ENCODE measurements at regions of chr22 and their contacts with region 1.

Region 1: GRCh38 chr22:19218541-19219233 is 40.2 kb upstream of the SLC25A1 start:
- DNase-seq: no peak
- ATAC-seq: no peak; the same call in 1 of the 2 replicates
- H3K4me3 ChIP-seq: no peak overlapping the region
- H3K27ac ChIP-seq: no peak overlapping the region
- H3K4me1 ChIP-seq: no peaks in the 10 kb centered on the region
- H3K27me3 ChIP-seq: no peaks in the 10 kb centered on the region
- CTCF ChIP-seq: no peak

Region 2: GRCh38 chr22:19043121-19044055 is 175.3 kb before region 1 on chr22:
- CTCF ChIA-PET with region 1: no interaction called
- POLR2A ChIA-PET with region 1: no interaction called
- intact Hi-C with region 1: no loop called
- DNase-seq: no peak
- ATAC-seq: no peak
- H3K4me3 ChIP-seq: no peak overlapping the region
- H3K27ac ChIP-seq: no peak overlapping the region
- H3K4me1 ChIP-seq: no peaks in the 10 kb centered on the region
- H3K27me3 ChIP-seq: no peaks in the 10 kb centered on the region
- CTCF ChIP-seq: no peak

Region 3: DNA sequence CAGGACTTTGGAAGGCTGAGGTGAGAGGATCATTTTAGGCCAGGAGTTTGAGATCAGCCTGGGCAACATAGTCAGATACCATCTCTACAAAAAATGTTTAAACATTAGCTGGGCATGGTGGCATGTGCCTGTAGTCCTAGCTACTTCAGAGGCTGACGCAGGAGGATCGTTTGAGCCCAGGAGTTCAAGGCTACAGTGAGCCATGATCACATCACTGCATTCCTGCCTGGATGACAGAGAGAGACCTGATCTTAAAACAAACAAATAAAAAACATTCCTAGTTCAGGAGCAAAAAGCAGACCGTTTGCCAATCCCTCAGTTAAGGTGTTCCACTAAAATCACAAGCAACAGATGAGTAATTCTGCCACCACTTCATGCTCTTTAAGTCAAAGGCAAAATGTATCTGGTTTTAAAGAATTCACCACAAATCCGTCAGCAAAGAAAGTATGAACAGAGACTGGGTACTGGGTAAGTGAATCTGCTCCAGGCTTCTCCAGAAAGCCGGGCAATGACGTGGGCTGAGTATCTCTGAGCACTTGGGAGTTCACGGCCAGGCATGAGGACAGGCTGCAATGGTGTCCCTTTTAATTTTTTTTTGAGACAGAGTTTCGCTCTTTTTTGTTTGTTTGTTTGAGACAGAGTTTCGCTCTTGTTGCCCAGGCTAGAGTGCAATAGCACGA is 53.3 kb after region 1 on chr22:
- CTCF ChIA-PET with region 1: no interaction called
- POLR2A ChIA-PET with region 1: no interaction called
- intact Hi-C with region 1: loop called (anchors 1 kb)
- DNase-seq: peak; percentile 90
- ATAC-seq: peak; percentile 92
- H3K4me3 ChIP-seq: no peak overlapping the region
- H3K27ac ChIP-seq: peak overlapping the region; percentile 96
- H3K4me1 ChIP-seq: peaks cover 21% of the 10 kb centered on the region
- H3K27me3 ChIP-seq: no peaks in the 10 kb centered on the region
- CTCF ChIP-seq: no peak

Region 4: GRCh38 chr22:19291580-19292457 is 73.1 kb after region 1 on chr22 and contains the start of gene CLTCL1:
- CTCF ChIA-PET with region 1: no interaction called
- POLR2A ChIA-PET with region 1: no interaction called
- intact Hi-C with region 1: loop called (anchors 5 kb)
- DNase-seq: peak; percentile 48
- ATAC-seq: peak; percentile 33
- H3K4me3 ChIP-seq: peak within 1 kb of the TSS; percentile 90
- H3K27ac ChIP-seq: no peak within 1 kb of the TSS; the same call in 1 of the 2 replicates
- H3K4me1 ChIP-seq: peaks cover 46% of the 10 kb centered on the region
- H3K27me3 ChIP-seq: no peaks in the 10 kb centered on the region
- CTCF ChIP-seq: no peak
- total RNA-seq, gene CLTCL1: 4.5 and 5.5 TPM in 2 replicates

Region 5: DNA sequence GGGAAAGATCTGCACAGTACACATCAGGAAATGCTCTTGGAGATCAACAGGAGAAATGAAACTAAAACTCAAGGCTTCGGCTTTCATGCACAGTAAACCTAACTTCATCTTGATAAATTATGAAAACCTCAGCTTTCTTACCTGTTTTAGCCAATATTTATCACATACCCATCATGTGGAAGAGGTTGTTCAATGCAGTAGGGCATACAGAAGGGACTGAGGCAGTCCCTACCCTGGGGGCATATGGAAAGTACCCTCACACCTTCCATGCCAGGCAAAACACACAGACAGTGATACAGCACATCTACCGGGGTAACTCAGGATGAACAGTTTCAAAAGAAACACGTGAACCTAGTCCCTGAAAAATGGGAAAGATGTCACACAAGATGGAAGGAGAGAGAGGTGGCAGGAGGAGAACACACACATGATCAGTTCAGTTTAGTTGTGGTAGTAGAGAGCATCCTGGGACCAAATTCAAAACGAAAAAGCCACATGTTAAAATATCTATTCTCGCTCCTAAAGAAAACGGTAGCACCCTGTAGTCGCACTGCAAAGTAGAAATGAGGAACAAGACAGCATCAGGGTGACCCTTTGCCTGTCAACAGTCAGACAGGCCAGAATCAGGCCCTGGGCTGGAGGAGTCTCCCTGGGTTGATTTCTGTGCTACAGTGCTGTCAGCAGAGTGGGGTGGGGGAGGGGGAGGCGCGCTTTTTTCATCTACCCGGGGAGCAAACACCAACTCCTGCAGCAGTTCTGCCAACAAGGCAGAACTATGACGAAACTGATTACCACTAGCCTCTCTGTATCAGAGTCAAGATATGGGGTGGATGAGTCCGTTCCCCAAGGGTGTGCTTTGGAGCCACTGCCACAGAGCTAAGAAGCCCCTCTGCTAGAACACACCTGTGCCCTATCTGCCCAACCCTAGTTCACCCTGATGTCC is 211.5 kb after region 1 on chr22:
- CTCF ChIA-PET with region 1: no interaction called
- POLR2A ChIA-PET with region 1: no interaction called
- intact Hi-C with region 1: no loop called
- DNase-seq: peak; percentile 7
- ATAC-seq: no peak
- H3K4me3 ChIP-seq: peak overlapping the region; percentile 98
- H3K27ac ChIP-seq: peak overlapping the region; percentile 52
- H3K4me1 ChIP-seq: peaks cover 24% of the 10 kb centered on the region
- H3K27me3 ChIP-seq: no peaks in the 10 kb centered on the region
- CTCF ChIP-seq: no peak

Measured in PC-3 (cell line).